ENCODE measurements at regions of chr5 and their contacts with region 1.

Region 1: DNA sequence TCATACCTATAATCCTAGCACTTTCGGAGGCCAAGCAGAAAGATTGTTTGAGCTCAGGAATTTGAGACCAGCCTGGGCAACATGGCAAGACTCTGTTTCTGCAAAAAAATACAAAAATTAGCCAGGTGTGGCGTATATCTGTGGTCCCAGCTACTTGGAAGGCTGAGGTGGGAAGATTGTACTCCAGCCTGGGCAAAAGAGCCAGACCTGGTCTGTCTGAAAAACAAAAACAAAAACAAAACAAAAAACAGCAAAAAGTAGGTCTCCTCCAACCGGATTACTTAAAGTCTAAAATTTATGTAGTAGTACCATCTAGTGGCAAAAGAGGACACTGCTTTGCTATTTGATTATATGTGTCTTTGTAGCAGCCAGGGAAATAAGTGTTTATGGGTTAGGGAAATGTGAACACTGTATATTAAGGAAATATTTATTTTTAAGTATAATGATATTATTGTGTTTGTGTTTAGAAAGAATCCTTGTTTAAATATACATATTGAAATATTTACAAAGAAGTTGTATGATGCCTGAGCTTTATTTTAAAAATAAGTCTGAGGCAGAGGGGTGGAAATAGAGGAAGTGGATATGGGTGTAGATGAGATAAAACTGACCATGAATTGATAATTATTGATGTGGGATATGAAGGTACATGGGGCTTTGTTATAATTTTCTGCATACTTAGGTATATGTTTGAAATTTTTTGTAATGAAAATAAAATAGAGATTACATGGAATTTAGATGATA is 20.0 kb downstream of the APC start:
- DNase-seq: peak in 1 of 2 experiments; percentile 60
- H3K4me3 ChIP-seq: no peak overlapping the region
- H3K4me1 ChIP-seq: no peaks in the 10 kb centered on the region
- H3K27me3 ChIP-seq: no peaks in the 10 kb centered on the region

Region 2: GRCh38 chr5:112174959-112175594 is 582.6 kb before region 1 on chr5:
- in situ Hi-C with region 1: loop called (anchors 10 kb)
- DNase-seq: peak; percentile 67 to 68
- H3K4me3 ChIP-seq: no peak overlapping the region
- H3K4me1 ChIP-seq: no peaks in the 10 kb centered on the region
- H3K27me3 ChIP-seq: no peaks in the 10 kb centered on the region

Measured in HAP-1 (cell line).